ENCODE measurements at regions of chr4 and their contacts with region 1.

Region 1: GRCh38 chr4:128809477-128810330 is at the start of gene JADE1:
- DNase-seq: peak; percentile 95
- ATAC-seq: peak; percentile 64
- H3K4me3 ChIP-seq: peak within 1 kb of the TSS; percentile 84
- H3K27ac ChIP-seq: peak within 1 kb of the TSS; percentile 95
- H3K4me1 ChIP-seq: no peaks in the 10 kb centered on the region
- H3K27me3 ChIP-seq: no peaks in the 10 kb centered on the region
- CTCF ChIP-seq: peak; percentile 93
- POLR2A ChIP-seq: peak; percentile 59
- RAD21 ChIP-seq: peak; percentile 85
- total RNA-seq, gene JADE1: 32.6 and 32.8 TPM in 2 replicates

Region 2: DNA sequence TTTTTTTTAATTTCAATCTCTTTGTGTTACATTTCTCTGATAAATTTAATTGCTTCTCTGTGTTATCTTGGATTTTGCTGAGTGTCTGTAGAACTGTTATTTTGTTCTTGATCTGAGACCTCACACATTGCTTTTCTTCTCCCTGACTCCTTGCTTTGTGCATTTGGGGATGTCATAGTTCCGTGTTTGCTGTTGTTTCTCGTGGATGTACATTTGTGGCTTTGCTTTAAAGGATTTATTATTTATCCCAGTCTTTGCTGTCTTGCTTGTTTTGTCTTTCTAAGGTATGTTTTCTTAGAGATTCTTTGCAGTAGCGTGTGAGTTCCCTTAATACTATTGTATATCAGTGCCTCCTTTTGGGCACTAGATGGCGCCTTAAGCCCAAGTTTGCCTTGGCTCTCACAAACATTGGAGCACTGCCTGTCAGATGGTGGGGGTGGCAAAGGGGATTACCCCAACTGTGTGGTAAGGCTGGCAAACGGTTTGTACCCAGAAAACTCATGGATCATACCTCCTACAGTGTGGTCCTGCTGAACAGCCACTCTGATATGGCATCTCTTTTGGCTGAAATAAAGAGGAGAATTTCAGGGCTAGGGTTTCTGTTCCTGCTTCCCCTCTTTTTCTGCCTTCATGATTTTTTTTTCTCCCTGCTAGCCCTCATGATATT is 618.5 kb before region 1 on chr4:
- CTCF ChIA-PET with region 1: no interaction called
- POLR2A ChIA-PET with region 1: no interaction called
- dilution Hi-C with region 1: no loop called
- in situ Hi-C with region 1: no loop called
- intact Hi-C with region 1: loop called (anchors 1 kb)
- DNase-seq: peak; percentile 77
- ATAC-seq: peak; percentile 98
- H3K4me3 ChIP-seq: no peak overlapping the region
- H3K27ac ChIP-seq: peak overlapping the region; percentile 9
- H3K4me1 ChIP-seq: peaks cover 5% of the 10 kb centered on the region
- H3K27me3 ChIP-seq: no peaks in the 10 kb centered on the region
- CTCF ChIP-seq: peak; percentile 92
- POLR2A ChIP-seq: no peak
- RAD21 ChIP-seq: peak; percentile 95

Region 3: GRCh38 chr4:128279624-128280225 is 530.0 kb before region 1 on chr4:
- CTCF ChIA-PET with region 1: no interaction called
- POLR2A ChIA-PET with region 1: no interaction called
- dilution Hi-C with region 1: no loop called
- in situ Hi-C with region 1: no loop called
- intact Hi-C with region 1: no loop called
- DNase-seq: no peak
- ATAC-seq: no peak
- H3K4me3 ChIP-seq: no peak overlapping the region
- H3K27ac ChIP-seq: peak overlapping the region; percentile 46; the same call in 1 of the 2 replicates
- H3K4me1 ChIP-seq: peaks cover 8% of the 10 kb centered on the region
- H3K27me3 ChIP-seq: no peaks in the 10 kb centered on the region
- CTCF ChIP-seq: no peak
- POLR2A ChIP-seq: no peak
- RAD21 ChIP-seq: no peak

Region 4: DNA sequence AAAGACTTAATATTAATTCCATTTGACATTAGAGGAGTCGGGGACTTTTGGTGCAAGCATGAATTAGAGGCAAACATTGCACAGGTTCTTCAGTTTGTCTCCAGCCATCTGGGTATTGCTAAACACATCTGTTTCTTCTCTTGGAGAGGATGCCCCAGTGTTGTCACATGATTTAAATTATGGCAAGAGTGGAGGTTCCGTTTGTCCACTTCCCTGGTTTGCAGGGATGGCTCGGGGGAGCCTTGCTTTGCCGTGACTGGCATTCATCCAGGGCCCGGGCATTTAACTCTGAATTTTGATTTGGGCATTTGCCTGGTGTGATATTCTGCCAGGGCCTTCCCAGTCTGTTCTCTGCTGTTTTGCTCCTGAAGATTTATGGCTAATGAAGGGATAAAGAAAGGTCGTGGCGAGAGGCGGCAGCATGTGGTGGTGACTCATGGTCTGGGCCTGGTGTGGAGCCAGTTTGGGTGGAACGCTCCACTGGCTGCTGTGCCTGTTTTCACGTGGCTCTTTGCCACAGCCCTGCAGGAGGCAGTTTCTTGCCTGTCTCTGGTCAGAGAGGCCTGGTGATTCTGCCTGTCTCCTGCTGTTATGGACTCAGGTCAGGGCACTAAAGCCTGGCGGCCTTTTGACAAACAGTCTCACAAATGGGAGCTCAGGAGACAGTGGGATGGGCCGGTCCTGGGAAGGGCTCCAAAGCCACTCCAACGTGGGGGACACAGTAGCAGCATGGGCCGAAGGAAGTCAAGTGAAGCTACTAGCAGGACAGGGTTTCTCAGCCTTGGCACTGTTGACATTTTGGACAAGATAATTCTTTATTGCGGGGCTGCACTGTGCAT is 422.7 kb before region 1 on chr4:
- CTCF ChIA-PET with region 1: no interaction called
- POLR2A ChIA-PET with region 1: no interaction called
- dilution Hi-C with region 1: no loop called
- in situ Hi-C with region 1: no loop called
- intact Hi-C with region 1: loop called (anchors 2 kb)
- DNase-seq: peak; percentile 97
- ATAC-seq: peak; percentile 68
- H3K4me3 ChIP-seq: no peak overlapping the region
- H3K27ac ChIP-seq: peak overlapping the region; percentile 91
- H3K4me1 ChIP-seq: peaks cover 34% of the 10 kb centered on the region
- H3K27me3 ChIP-seq: no peaks in the 10 kb centered on the region
- CTCF ChIP-seq: 0 out of 2 replicates have a peak, but pooled peaks have one; percentile 18
- POLR2A ChIP-seq: peak; percentile 53
- RAD21 ChIP-seq: peak; percentile 29

Region 5: GRCh38 chr4:128512121-128512520 is 297.6 kb before region 1 on chr4:
- CTCF ChIA-PET with region 1: no interaction called
- POLR2A ChIA-PET with region 1: interaction called, 15 read pairs
- dilution Hi-C with region 1: no loop called
- in situ Hi-C with region 1: no loop called
- intact Hi-C with region 1: loop called (anchors 1 kb)
- DNase-seq: no peak
- ATAC-seq: no peak
- H3K4me3 ChIP-seq: no peak overlapping the region
- H3K27ac ChIP-seq: no peak overlapping the region
- H3K4me1 ChIP-seq: peaks cover 10% of the 10 kb centered on the region
- H3K27me3 ChIP-seq: no peaks in the 10 kb centered on the region
- CTCF ChIP-seq: no peak
- POLR2A ChIP-seq: no peak
- RAD21 ChIP-seq: no peak

Region 6: GRCh38 chr4:128574706-128575105 is 235.0 kb before region 1 on chr4:
- CTCF ChIA-PET with region 1: interaction called, 5 read pairs
- POLR2A ChIA-PET with region 1: no interaction called
- dilution Hi-C with region 1: no loop called
- in situ Hi-C with region 1: loop called (anchors 10 kb)
- intact Hi-C with region 1: loop called (anchors 2 kb)
- DNase-seq: peak; percentile 68
- ATAC-seq: peak; percentile 25
- H3K4me3 ChIP-seq: no peak overlapping the region
- H3K27ac ChIP-seq: no peak overlapping the region
- H3K4me1 ChIP-seq: peaks cover 22% of the 10 kb centered on the region
- H3K27me3 ChIP-seq: no peaks in the 10 kb centered on the region
- CTCF ChIP-seq: peak; percentile 58
- POLR2A ChIP-seq: no peak
- RAD21 ChIP-seq: peak; percentile 55

Region 7: GRCh38 chr4:129093191-129093920 is 283.7 kb after region 1 on chr4 and contains the start of gene SCLT1:
- CTCF ChIA-PET with region 1: no interaction called
- POLR2A ChIA-PET with region 1: no interaction called
- dilution Hi-C with region 1: no loop called
- in situ Hi-C with region 1: no loop called
- intact Hi-C with region 1: loop called (anchors 1 kb)
- DNase-seq: peak; percentile 99
- ATAC-seq: peak; percentile 96
- H3K4me3 ChIP-seq: peak within 1 kb of the TSS; percentile 87
- H3K27ac ChIP-seq: peak within 1 kb of the TSS; percentile 86
- H3K4me1 ChIP-seq: no peaks in the 10 kb centered on the region
- H3K27me3 ChIP-seq: no peaks in the 10 kb centered on the region
- CTCF ChIP-seq: no peak
- POLR2A ChIP-seq: peak; percentile 93
- RAD21 ChIP-seq: no peak
- total RNA-seq, gene SCLT1: 7.7 and 15.3 TPM in 2 replicates